ENCODE measurements at regions of chr11 and their contacts with region 1.

Region 1: GRCh38 chr11:62169935-62170548 is 20.0 kb upstream of the SCGB1D1 start:
- DNase-seq: no peak
- H3K4me3 ChIP-seq: no peak overlapping the region
- H3K27ac ChIP-seq: no peak overlapping the region
- H3K4me1 ChIP-seq: no peaks in the 10 kb centered on the region
- H3K27me3 ChIP-seq: peaks cover 2% of the 10 kb centered on the region
- CTCF ChIP-seq: no peak

Region 2: DNA sequence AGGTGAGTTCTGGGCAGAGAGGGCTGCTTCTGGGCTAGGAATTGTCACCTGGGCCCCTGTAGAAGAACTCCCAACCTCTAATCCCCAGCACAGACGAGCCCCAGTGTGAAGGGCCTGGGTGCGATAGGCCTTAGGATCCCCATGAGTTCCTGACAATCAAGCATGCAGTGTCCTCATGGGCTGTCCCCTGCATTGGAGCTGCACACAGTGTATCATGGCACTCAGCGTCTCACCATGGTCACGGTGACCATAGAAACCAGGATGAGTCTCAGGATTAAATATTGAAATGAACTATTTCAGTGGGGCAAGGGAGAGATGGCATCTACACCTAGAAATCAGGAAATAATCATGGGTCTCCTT is 38.7 kb after region 1 on chr11:
- intact Hi-C with region 1: loop called (anchors 5 kb)
- DNase-seq: no peak
- H3K4me3 ChIP-seq: no peak overlapping the region
- H3K27ac ChIP-seq: no peak overlapping the region
- H3K4me1 ChIP-seq: no peaks in the 10 kb centered on the region
- H3K27me3 ChIP-seq: no peaks in the 10 kb centered on the region
- CTCF ChIP-seq: no peak

Region 3: DNA sequence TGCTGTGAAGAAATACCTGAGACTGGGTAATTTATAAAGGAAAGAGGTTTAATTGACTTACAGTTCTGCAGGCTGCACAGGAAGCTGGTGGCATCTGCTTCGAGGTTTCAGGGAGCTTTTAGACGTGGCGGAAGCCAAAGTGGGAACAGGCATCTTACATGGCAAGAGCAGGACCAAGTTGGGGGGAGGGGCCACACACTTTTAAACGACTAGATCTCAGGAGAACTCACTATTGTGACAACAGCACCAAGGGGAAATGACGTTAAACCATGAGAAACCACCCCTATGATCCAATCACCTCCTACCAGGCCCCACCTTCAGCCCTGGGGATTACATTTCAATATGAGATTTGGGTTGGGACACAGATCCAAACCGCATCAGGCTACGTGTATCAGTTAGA is 139.9 kb after region 1 on chr11:
- intact Hi-C with region 1: loop called (anchors 2 kb)
- DNase-seq: no peak
- H3K4me3 ChIP-seq: no peak overlapping the region
- H3K27ac ChIP-seq: no peak overlapping the region
- H3K4me1 ChIP-seq: no peaks in the 10 kb centered on the region
- H3K27me3 ChIP-seq: no peaks in the 10 kb centered on the region
- CTCF ChIP-seq: no peak

Region 4: DNA sequence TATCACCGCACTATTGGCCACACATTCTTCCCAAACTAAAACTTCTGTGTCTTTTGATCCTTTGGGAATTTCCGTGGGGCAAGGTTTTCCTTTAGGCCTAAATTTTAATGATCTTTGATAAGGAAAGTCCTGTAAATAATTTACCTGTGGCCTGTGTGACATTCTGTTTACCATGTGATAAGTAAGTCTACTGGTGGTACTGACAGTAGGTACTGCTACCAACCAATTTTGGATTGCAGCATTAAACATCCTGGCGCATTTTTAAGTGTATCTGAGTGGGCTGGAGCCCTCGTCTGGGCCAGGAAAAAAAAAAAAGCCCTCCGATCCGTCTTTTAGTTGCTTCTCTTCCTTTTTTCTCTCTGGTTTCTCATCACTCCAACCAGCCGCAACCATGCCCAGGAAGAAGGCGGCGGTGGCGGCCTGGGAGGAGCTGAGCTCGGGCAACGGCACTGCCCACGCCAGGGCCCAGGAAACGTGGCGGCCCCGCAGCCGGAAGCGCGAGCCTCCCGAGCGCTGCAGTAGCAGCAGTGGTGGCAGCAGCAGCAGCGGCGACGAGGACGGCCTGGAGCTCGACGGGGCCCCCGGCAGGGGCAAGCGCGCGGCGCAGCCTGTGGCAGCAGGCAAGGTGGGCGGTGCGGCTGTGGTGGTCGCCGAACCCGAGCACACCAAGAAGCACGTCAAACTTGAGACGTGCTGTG is 200.8 kb after region 1 on chr11:
- intact Hi-C with region 1: loop called (anchors 5 kb)
- DNase-seq: peak; percentile 74
- H3K4me3 ChIP-seq: peak overlapping the region; percentile 13
- H3K27ac ChIP-seq: peak overlapping the region; percentile 80
- H3K4me1 ChIP-seq: peaks cover 9% of the 10 kb centered on the region
- H3K27me3 ChIP-seq: no peaks in the 10 kb centered on the region
- CTCF ChIP-seq: no peak